RWPE1 (cell line): ENCODE measurements at regions of chr6 and their contacts with region 1.

Region 1: DNA sequence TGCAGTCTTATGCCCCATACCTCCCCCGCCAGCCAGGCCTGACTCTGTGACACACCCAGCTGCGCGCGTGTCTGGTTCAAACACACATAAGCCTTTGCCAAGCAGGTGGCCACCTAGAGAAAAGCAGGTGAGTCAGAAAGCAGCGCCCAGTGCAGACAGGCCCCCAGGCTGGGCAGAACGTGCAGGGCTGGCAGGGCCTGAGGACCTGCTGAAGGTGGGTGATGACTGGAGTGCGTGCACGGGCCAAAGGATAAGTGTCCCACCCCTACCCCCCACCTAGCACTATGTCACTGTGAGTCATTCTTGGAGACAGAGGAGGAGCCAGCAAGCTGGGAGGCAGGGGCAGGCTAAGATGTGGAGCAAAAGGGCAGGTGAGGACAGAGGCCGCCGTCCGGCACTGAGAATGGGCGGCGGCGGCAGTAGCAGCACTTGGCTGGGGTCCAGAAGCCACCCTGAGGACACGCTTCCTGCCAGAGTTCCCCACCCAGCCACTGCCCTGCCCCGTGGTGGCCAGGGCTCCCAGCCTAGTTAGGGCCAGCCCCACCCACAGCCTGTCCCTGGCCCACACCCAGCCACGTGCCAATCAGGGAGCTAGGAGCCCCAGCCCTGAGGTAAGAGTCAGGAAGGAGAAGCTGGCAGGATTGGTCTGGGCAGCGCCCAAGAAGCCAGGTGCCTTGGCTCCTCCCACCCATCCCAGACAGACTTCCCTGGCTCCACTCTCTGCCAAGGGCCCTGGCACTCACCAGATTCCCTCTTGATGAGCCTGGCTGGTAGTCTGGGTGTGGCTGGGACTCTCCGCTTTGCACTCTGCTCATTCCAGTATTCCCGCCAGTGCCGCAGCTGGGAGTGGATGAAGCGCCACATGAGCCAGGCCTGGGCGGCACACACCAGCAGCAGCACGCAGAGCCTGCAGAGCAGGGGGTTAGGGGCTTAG is 72.7 kb downstream of the TRAM2 start:
- DNase-seq: peak; percentile 98
- H3K27ac ChIP-seq: peak overlapping the region; percentile 100
- CTCF ChIP-seq: no peak

Region 2: DNA sequence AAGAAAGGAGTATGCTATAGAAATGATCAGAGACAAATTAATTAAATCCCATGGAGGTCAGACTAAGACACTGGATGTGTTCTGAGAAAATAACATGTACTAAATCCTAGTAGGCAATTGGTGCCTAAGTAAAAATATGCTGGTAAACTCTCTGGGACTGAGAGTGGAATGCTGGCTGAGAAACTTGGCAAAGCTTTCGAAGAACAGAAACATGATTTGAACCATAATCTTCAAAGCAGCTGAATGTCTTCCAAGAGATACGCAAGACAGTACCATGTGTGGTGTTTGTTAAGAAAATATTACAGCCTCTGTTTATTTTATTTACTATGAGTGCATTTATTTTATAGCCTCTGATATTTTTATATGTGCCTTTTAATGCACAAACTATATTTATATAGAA is 28.8 kb before region 1 on chr6:
- CTCF ChIA-PET with region 1: no interaction called
- POLR2A ChIA-PET with region 1: no interaction called
- DNase-seq: no peak
- H3K27ac ChIP-seq: no peak overlapping the region
- CTCF ChIP-seq: no peak

Region 3: GRCh38 chr6:52577022-52577777 is 73.1 kb after region 1 on chr6 and contains the start of gene TRAM2:
- CTCF ChIA-PET with region 1: no interaction called
- POLR2A ChIA-PET with region 1: interaction called, 10 read pairs
- DNase-seq: peak; percentile 77
- H3K27ac ChIP-seq: peak within 1 kb of the TSS; percentile 95
- CTCF ChIP-seq: no peak